ENCODE measurements at regions of chr17 and their contacts with region 1.

Region 1: GRCh38 chr17:62065598-62066468 is 755 bp upstream of the MED13 start:
- DNase-seq: peak; percentile 97 to 99 (median 98)
- H3K4me3 ChIP-seq: peak overlapping the region; percentile 60 to 99 (median 93)
- H3K27ac ChIP-seq: peak overlapping the region; percentile 90 to 100 (median 99)
- H3K27me3 ChIP-seq: no peaks in the 10 kb centered on the region
- CTCF ChIP-seq: peak; percentile 85 to 99 (median 94)

Region 2: DNA sequence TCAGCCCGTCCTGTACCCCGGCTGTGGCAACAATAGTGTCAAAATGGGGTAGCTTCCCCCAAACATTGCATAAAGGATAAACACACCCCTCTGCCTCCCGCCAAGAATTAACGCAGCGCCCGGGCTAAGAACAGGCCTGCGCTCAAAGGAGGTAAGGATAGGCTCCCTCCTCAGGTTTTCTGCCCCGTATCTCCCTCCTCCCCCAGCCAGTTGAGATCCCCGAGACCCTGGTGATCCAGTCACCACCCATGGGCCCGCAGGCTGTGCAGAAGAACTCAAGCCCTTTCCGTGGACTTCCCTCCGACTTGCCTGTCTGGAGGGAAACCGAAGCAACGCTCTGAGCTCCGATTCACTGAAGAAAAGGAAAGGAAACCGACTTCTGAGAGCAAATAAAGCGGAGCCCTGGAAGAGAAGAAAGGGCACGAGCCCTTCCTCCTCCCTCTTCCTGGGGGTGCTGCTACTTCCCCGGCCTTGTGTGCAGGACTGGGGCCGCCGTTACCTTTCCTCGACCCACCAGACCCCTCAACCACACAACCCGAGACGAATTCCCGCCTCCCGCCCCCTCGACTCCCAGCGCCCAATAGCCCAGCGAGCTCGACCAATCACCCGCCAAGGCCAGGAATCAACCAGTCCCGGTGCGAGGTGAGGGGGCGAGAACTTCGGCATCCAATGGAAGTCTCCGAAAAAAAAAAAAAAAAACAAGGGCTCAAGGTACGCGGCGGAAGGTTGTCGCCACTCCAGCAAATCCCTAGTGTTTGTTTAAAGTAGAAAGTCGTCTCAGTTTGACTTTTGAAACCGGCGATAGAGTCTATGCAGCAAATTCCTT is 202.6 kb before region 1 on chr17 and contains the start of gene BRIP1:
- intact Hi-C with region 1: loop called in 1 of 2 experiments (anchors 5 kb)
- DNase-seq: peak; percentile 62 to 92 (median 84)
- H3K4me3 ChIP-seq: peak within 1 kb of the TSS; percentile 54 to 91 (median 76)
- H3K27ac ChIP-seq: peak within 1 kb of the TSS in 25 of 59 donors; percentile 8 to 77 (median 43)
- H3K27me3 ChIP-seq: no peaks in the 10 kb centered on the region
- CTCF ChIP-seq: peak in 2 of 56 donors; percentile 12 to 34
- total RNA-seq, gene BRIP1: 0.47 to 3.9 (median 1.4) TPM

Region 3: GRCh38 chr17:61927200-61928165 is 138.3 kb before region 1 on chr17 and contains the start of gene INTS2:
- intact Hi-C with region 1: loop called (anchors 1 to 5 kb)
- DNase-seq: peak; percentile 91 to 97 (median 94)
- H3K4me3 ChIP-seq: peak within 1 kb of the TSS; percentile 49 to 94 (median 81)
- H3K27ac ChIP-seq: peak within 1 kb of the TSS; percentile 70 to 98 (median 92)
- H3K27me3 ChIP-seq: no peaks in the 10 kb centered on the region
- CTCF ChIP-seq: peak in 27 of 56 donors; percentile 15 to 54 (median 28)
- total RNA-seq, gene INTS2: 15.2 to 33.0 (median 21.8) TPM

Measured in dorsolateral prefrontal cortex (tissue), 120 donors.